CD4-positive, alpha-beta memory T cell (primary cell): ENCODE measurements at regions of chr1 and their contacts with region 1.

Region 1: DNA sequence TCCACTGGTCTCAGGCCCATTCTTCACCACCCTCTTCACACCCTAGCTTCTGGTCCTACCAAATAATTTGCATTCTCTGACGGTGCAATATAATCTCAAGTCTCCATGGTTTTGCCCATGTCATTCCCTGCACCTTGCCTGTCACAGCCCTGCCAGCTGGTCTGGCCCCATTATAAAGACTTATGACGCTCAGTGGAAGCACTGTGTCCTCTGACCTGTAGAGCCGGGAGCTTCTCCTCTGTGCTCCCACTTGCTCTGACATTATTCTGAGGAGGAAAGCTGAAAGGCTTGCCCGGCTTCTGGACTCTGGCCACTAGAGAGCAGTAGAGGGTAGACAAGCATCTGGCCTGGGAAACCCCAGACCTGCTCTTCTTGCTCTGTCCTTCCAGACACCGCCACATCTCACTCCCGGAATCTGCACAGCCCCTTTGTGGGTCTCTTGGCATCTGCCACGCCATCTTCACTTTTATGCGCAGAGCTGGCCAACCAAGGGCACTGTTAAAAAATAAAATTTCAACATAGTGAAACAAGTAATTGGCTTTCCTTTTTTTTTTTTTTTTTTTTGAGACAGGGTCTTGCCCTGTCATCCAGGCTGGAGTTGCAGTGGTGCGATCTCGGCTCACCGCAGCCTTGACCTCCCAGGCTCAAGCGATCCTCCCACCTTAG is 44.4 kb downstream of the NENF start:
- DNase-seq: peak; percentile 67 to 78 (median 70)
- H3K4me3 ChIP-seq: no peak overlapping the region
- H3K4me3 Mint-ChIP-seq: peak overlapping the region in 6 of 8 donors; percentile 19 to 70 (median 45)
- H3K27ac ChIP-seq: no peak overlapping the region
- H3K27ac Mint-ChIP-seq: peak overlapping the region in 1 of 7 donors; percentile 32
- H3K4me1 ChIP-seq: peaks cover 8% of the 10 kb centered on the region
- H3K4me1 Mint-ChIP-seq: peaks cover 0 to 14% (median 5%) of the 10 kb centered on the region in 4 donors
- H3K27me3 ChIP-seq: no peaks in the 10 kb centered on the region
- H3K27me3 Mint-ChIP-seq: peaks cover 2 to 6% of the 10 kb centered on the region in 2 donors

Region 2: DNA sequence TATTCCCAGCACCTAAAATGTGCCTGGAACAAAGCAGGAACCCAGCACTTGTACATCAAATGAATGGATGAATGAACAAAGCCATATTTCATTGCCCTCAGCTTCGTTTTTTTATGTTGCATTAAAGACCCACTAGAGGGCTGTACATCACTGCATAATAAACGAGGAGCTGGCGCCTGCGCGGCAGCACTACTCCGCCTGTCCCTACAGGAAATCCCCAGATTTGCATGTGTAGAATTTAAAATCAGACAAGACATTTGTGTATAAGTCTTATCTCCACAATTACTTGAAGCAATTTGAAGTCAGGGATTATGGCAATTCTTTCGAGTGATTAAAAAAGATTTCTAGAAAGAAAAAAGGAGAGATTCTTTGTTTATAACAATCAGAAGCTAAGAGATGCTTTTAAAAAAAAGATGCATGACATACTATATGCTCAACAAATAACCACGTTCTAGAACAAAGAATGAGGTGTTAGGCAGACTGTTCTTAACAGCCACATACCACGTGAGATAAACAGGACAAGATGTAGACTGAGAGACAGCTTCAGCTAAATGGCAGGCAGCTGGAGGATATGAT is 796.3 kb before region 1 on chr1:
- CTCF ChIA-PET with region 1: interaction called, 15 read pairs
- POLR2A ChIA-PET with region 1: no interaction called
- intact Hi-C with region 1: no loop called
- DNase-seq: peak; percentile 76 to 83 (median 82)
- H3K4me3 ChIP-seq: no peak overlapping the region
- H3K4me3 Mint-ChIP-seq: peak overlapping the region in 4 of 8 donors; percentile 0 to 56 (median 17)
- H3K27ac ChIP-seq: peak overlapping the region; percentile 61
- H3K27ac Mint-ChIP-seq: peak overlapping the region; percentile 77 to 98 (median 92)
- H3K4me1 ChIP-seq: peaks cover 15% of the 10 kb centered on the region
- H3K4me1 Mint-ChIP-seq: peaks cover 9 to 26% (median 12%) of the 10 kb centered on the region in 4 donors
- H3K27me3 ChIP-seq: no peaks in the 10 kb centered on the region
- H3K27me3 Mint-ChIP-seq: no peaks in the 10 kb centered on the region

Region 3: DNA sequence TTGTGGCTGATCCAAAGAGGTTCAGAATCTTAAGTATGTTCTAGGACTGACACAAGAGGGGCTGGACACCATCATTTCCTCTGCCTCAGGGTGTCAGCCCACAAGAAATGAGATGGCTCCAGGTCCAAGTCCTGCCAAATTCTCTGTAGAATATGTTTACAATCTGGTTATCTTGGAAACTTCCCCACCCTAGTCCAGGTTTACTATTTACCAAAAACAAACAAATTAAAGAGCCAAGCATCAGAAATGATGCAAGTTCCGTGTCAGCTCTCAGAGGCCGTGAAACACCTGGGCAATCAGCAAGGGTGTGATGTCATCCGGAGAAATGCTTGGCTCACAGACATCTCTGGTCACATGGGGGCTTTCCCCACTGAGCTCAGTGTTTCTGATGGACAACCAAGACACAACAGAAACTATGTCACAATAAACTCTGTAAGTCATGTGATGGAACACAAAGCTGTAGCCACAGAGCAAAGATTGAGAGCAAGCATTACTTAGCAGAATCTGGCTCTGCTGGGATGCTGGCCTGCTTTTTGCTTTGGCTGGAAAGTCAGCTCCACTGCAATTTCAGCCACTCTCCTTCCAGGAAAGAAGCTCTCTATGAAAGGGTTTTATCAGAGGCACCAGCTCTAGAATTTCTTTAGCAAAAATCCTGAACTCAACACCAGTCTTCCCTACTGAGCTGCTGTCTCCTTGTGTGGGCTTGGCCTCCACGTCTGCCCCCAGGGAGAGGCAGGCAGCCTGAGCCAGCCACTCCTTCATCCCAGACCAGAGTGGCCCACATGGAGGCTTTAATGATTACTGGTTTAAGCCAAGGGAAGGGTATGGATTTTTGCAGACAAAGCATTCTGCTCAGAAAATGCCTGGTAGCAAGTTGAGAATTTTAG is 11.5 kb after region 1 on chr1:
- CTCF ChIA-PET with region 1: interaction called, 17 read pairs
- POLR2A ChIA-PET with region 1: no interaction called
- intact Hi-C with region 1: no loop called
- DNase-seq: peak in 1 of 5 donors; percentile 52
- H3K4me3 ChIP-seq: no peak overlapping the region
- H3K4me3 Mint-ChIP-seq: no peak overlapping the region
- H3K27ac ChIP-seq: no peak overlapping the region
- H3K27ac Mint-ChIP-seq: no peak overlapping the region
- H3K4me1 ChIP-seq: no peaks in the 10 kb centered on the region
- H3K4me1 Mint-ChIP-seq: no peaks in the 10 kb centered on the region
- H3K27me3 ChIP-seq: no peaks in the 10 kb centered on the region
- H3K27me3 Mint-ChIP-seq: peaks cover 1 to 4% of the 10 kb centered on the region in 2 donors

Region 4: GRCh38 chr1:212595787-212596714 is 118.9 kb after region 1 on chr1:
- CTCF ChIA-PET with region 1: interaction called, 4 read pairs
- POLR2A ChIA-PET with region 1: no interaction called
- intact Hi-C with region 1: loop called (anchors 1 kb)
- DNase-seq: peak; percentile 44 to 82 (median 70)
- H3K4me3 ChIP-seq: peak overlapping the region; percentile 8 to 24
- H3K4me3 Mint-ChIP-seq: peak overlapping the region; percentile 63 to 83 (median 78)
- H3K27ac ChIP-seq: peak overlapping the region; percentile 37
- H3K27ac Mint-ChIP-seq: peak overlapping the region; percentile 71 to 94 (median 80)
- H3K4me1 ChIP-seq: peaks cover 19% of the 10 kb centered on the region
- H3K4me1 Mint-ChIP-seq: peaks cover 9 to 18% (median 13%) of the 10 kb centered on the region in 4 donors
- H3K27me3 ChIP-seq: no peaks in the 10 kb centered on the region
- H3K27me3 Mint-ChIP-seq: peaks cover 11 to 19% of the 10 kb centered on the region in 2 donors

Region 5: DNA sequence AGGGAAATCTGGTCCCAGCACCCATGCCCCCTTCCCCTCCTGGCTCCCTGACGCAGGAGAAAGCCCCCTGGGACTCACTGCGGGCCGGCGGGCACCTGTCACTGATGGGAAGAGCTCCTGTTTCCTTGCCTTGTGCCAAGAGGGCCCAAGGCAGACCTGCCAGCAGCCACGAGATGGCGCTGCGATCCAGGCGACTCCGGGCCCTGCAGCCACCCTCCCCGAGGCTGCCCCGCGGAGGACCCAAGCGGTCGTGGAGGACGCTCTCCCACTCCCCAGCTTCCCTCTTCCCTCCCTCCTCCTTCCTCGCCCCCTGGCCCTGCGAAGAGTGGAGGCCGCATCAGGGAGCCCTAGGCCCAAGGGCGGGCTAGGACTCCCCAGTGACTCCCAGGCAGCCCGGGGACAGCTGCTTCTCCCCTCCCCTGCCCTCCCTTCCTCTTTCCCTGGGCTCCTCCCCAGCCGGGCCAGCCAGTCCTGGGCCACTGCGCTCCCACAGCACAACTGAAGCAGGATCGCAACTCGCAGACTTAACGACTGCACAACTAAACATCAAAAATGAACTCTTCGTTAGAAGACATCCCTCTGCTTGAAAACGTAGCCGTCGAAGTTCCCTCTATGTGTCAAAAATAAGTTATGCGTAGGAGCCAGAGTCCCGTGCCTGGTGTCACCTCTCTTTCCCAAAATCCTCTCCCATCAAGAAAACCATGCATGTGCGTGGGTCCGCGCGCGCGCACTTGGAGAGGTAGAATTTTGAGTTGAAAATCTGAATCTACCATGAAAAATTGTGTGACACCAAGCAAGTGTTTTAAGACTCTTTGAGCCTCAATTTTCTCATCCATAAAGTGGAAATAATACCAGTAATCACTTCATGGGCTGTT is 188.3 kb after region 1 on chr1:
- CTCF ChIA-PET with region 1: interaction called, 11 read pairs
- POLR2A ChIA-PET with region 1: no interaction called
- intact Hi-C with region 1: no loop called
- DNase-seq: peak; percentile 65 to 80 (median 71)
- H3K4me3 ChIP-seq: peak overlapping the region in 1 of 2 donors; percentile 40
- H3K4me3 Mint-ChIP-seq: peak overlapping the region; percentile 43 to 86 (median 82)
- H3K27ac ChIP-seq: no peak overlapping the region
- H3K27ac Mint-ChIP-seq: peak overlapping the region in 1 of 7 donors; percentile 19
- H3K4me1 ChIP-seq: peaks cover 5% of the 10 kb centered on the region
- H3K4me1 Mint-ChIP-seq: peaks cover 1 to 7% (median 6%) of the 10 kb centered on the region in 4 donors
- H3K27me3 ChIP-seq: no peaks in the 10 kb centered on the region
- H3K27me3 Mint-ChIP-seq: peaks cover 1 to 2% of the 10 kb centered on the region in 2 donors

Region 6: GRCh38 chr1:212782422-212783154 is 305.4 kb after region 1 on chr1:
- CTCF ChIA-PET with region 1: interaction called, 28 read pairs
- POLR2A ChIA-PET with region 1: no interaction called
- intact Hi-C with region 1: loop called (anchors 1 kb)
- DNase-seq: peak in 4 of 5 donors; percentile 29 to 38 (median 32)
- H3K4me3 ChIP-seq: no peak overlapping the region
- H3K4me3 Mint-ChIP-seq: peak overlapping the region in 1 of 8 donors; percentile 10
- H3K27ac ChIP-seq: no peak overlapping the region
- H3K27ac Mint-ChIP-seq: peak overlapping the region in 3 of 7 donors; percentile 12 to 29 (median 17)
- H3K4me1 ChIP-seq: no peaks in the 10 kb centered on the region
- H3K4me1 Mint-ChIP-seq: peaks cover 2 to 8% (median 6%) of the 10 kb centered on the region in 4 donors
- H3K27me3 ChIP-seq: no peaks in the 10 kb centered on the region
- H3K27me3 Mint-ChIP-seq: no peaks in the 10 kb centered on the region